ENCODE measurements at regions of chr9 and their contacts with region 1.

Region 1: GRCh38 chr9:72262063-72262462 is 102.9 kb downstream of the ZFAND5 start:
- DNase-seq: no peak
- H3K4me3 ChIP-seq: no peak overlapping the region
- CTCF ChIP-seq: no peak

Region 2: DNA sequence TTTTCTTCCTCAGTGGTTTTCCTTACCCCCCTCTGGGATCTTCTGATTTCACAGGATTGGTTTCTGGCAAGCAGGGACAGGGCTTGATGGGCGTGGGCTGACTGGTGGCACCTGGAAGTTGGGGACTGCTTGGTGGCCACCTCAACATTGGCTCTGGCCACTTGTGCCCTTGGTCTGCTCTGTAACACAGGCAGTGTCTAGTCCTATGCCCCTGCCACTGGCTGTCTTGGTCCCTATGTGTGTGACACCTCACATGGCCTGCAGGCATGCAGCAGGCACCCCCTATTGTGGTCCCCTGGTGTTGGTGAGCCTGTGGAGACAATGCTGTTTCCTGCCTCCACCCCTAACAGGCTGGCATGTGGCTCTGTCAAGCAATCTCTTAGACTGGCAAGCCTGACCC is 41.5 kb before region 1 on chr9:
- in situ Hi-C with region 1: loop called (anchors 5 kb)
- DNase-seq: no peak
- H3K4me3 ChIP-seq: no peak overlapping the region
- CTCF ChIP-seq: no peak

Measured in astrocyte of the cerebellum (primary cell).